ENCODE measurements at regions of chr1 and their contacts with region 1.

Region 1: DNA sequence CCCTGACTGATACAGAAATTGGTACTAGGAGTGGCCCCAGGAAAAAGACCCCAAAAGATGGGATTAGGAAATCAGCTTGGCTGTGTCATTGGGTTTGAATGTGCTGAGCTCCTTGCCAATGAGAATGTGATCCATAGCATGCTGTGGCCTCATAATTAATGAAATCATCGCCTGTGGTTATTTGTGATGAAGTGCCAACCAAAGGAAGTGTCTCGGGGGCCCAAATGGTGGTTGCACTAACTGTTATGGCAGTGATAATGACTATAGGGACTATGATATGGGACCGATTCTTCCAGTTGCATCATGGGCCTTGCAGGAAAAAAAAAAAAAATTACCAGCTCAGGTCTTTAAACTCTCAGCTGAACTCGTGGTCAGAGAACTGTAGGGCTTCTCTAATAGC is 15.4 kb upstream of the ZDHHC18 start:
- DNase-seq: no peak
- H3K4me3 ChIP-seq: no peak overlapping the region
- H3K27ac ChIP-seq: no peak overlapping the region
- H3K4me1 ChIP-seq: no peaks in the 10 kb centered on the region
- H3K27me3 ChIP-seq: no peaks in the 10 kb centered on the region
- CTCF ChIP-seq: no peak
- POLR2A ChIP-seq: no peak

Region 2: DNA sequence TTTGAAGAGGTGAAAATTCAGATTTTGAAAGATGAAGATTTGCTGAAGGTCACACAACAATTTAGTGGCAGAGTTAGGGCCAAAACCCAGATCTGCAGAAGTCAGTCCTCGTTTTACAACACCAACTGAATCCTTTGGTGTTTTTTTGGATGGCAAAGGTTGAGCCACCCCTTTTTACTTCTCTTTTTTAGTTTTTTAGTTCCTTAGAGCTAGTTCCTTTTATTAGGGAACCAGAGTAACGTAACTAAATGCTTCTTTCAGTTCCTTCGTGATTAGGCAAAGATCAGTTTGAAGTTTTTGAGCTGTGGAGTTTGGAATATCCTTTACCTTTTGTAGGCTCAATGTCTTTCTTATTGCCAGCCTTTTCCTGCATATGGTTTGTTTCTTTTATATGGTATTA is 183.1 kb before region 1 on chr1:
- CTCF ChIA-PET with region 1: no interaction called
- POLR2A ChIA-PET with region 1: no interaction called
- dilution Hi-C with region 1: no loop called
- intact Hi-C with region 1: no loop called
- DNase-seq: no peak
- H3K4me3 ChIP-seq: no peak overlapping the region
- H3K27ac ChIP-seq: no peak overlapping the region
- H3K4me1 ChIP-seq: no peaks in the 10 kb centered on the region
- H3K27me3 ChIP-seq: peaks cover 0 to 2% of the 10 kb centered on the region in 2 experiments
- CTCF ChIP-seq: no peak
- POLR2A ChIP-seq: no peak

Region 3: DNA sequence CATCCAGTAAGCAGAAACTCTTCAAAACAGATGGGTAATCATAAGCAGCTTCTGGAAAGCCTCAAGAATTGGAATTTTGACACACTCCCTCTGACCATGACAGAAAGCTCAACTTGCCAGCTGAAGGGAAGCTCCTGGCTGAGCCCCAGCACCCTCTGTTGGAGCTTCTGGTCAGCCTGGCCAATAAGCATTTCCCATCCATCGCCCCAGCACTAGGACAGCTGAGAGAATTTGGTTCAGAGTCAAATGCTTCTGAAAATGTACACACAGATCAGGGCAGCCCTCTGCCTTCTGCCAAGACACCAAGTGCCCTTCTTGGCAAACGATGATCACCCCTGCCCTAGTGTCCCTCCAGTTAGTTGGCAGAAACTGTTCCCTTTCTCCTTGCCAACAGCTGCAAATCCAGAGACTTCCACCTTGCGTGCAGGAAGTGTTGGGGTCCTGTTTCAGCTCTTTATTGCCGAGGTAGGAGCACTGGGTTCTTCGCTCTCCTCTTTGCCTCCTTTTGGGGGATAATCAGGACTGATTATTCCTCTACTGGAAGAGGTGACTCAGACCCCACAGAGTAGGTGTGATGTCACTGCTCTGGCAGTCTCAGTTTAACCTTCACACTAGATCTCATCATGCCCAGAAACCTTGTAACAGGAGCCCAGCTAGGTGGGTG is 11.4 kb before region 1 on chr1:
- CTCF ChIA-PET with region 1: interaction called, 31 read pairs
- POLR2A ChIA-PET with region 1: no interaction called
- dilution Hi-C with region 1: no loop called
- intact Hi-C with region 1: no loop called
- DNase-seq: peak; percentile 55
- H3K4me3 ChIP-seq: peak overlapping the region in 1 of 3 experiments; percentile 57
- H3K27ac ChIP-seq: peak overlapping the region; percentile 72
- H3K4me1 ChIP-seq: peaks cover 12% of the 10 kb centered on the region
- H3K27me3 ChIP-seq: no peaks in the 10 kb centered on the region
- CTCF ChIP-seq: no peak
- POLR2A ChIP-seq: no peak

Region 4: DNA sequence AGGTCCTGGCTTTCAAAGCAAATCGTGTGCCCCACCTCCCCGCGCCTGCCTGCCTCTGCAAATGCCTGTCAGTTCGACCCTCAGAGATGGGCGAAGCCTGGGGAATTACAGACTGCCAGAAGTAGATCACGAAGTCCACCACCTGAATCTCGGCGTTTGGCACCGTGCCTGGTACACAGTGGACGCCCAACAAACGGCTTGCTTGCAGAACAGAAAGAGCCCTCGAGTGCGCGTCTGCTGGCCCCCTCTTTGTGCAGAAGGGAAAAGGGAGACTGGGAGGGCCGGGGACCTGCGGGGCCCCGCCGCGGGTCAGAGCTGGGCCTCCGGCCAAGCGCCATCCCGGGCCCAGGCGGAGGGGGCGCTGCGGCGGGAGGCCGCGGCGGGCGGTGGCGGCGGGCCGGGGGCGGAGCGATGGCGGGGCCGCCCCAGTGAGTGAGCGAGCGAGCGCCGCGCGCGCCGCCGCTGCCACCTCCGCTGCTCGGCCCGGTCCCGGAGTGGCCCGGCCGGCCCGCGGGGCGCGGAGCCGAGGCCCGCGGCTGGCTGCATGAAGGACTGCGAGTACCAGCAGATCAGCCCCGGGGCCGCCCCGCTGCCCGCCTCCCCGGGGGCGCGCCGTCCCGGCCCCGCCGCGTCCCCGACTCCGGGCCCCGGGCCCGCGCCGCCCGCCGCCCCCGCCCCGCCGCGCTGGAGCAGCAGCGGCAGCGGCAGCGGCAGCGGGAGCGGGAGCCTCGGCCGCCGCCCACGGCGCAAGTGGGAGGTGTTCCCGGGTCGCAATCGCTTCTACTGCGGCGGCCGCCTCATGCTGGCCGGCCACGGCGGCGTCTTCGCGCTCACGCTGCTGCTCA is 15.4 kb after region 1 on chr1 and contains the start of gene ZDHHC18:
- CTCF ChIA-PET with region 1: interaction called, 35 read pairs
- POLR2A ChIA-PET with region 1: no interaction called
- dilution Hi-C with region 1: no loop called
- intact Hi-C with region 1: no loop called
- DNase-seq: peak; percentile 49
- H3K4me3 ChIP-seq: peak within 1 kb of the TSS; percentile 60 to 93 (median 73)
- H3K27ac ChIP-seq: no peak within 1 kb of the TSS
- H3K4me1 ChIP-seq: peaks cover 11% of the 10 kb centered on the region
- H3K27me3 ChIP-seq: no peaks in the 10 kb centered on the region
- CTCF ChIP-seq: peak; percentile 37 to 47
- POLR2A ChIP-seq: peak; percentile 72
- total RNA-seq, gene ZDHHC18: 24.0 and 25.2 TPM in 2 replicates

Region 5: DNA sequence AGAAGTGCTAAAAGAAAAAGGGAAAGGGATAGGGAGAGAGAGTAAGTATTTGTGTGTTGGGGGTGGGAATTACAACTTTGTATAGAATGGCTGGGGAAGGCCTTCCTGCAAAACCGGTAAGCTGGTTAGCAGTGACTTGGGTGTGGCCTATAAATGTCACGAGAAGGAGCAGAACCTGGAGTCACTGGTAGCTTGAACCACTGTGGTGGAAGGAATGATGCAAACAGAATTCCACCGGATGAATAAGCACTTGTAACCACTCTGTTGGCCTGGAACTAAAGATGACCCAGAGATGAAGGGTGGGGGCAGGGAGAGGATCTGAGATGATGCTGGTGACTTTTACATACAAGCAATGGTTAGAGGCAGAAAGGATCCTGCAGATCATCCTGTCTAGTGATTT is 1157.6 kb after region 1 on chr1:
- CTCF ChIA-PET with region 1: no interaction called
- POLR2A ChIA-PET with region 1: no interaction called
- dilution Hi-C with region 1: no loop called
- intact Hi-C with region 1: no loop called
- DNase-seq: no peak
- H3K4me3 ChIP-seq: no peak overlapping the region
- H3K27ac ChIP-seq: no peak overlapping the region
- H3K4me1 ChIP-seq: no peaks in the 10 kb centered on the region
- H3K27me3 ChIP-seq: no peaks in the 10 kb centered on the region
- CTCF ChIP-seq: no peak
- POLR2A ChIP-seq: no peak